Aorta (tissue), 5 donors: ENCODE measurements at regions of chr16 and their contacts with region 1.

Region 1: GRCh38 chr16:58582971-58583765 is 46.5 kb downstream of the CNOT1 start:
- DNase-seq: no peak
- ATAC-seq: no peak
- H3K4me3 ChIP-seq: no peak overlapping the region
- H3K27ac ChIP-seq: no peak overlapping the region
- H3K4me1 ChIP-seq: no peaks in the 10 kb centered on the region
- H3K27me3 ChIP-seq: no peaks in the 10 kb centered on the region

Region 2: DNA sequence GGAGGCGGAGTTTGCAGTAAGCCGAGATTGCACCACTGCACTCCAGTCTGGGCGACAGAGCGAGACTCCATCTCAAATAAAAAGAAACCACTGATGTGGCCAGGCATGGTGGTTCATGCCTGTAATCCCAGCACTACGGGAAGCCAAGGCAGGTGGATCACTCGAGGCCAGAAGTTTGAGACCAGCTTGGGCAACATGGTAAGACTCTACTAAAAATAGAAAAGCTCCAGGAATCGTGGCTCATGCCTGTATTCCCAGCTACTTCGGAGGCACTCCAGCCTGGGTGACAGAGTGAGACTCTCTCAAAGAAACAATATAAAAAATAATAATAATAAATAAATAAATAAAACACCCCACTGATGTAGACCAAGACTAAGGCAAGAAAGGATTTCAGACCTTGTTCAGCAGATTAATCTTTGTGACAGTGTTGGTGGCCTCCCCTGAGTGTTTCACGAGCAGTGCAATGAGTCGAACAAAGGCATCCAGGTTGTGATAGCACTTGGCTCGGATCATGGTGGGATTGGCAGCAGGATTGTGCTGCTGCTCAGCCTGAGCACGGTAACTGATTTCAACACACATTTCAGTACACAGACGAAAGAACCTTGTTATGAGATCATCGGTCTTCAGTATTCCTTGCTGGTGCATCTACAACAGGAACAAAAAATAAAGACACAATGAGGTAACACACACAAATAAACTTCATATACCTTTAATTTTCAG is 49.3 kb before region 1 on chr16:
- intact Hi-C with region 1: loop called in 1 of 2 experiments (anchors 10 kb)
- DNase-seq: no peak
- ATAC-seq: no peak
- H3K4me3 ChIP-seq: no peak overlapping the region
- H3K27ac ChIP-seq: no peak overlapping the region
- H3K4me1 ChIP-seq: no peaks in the 10 kb centered on the region
- H3K27me3 ChIP-seq: no peaks in the 10 kb centered on the region

Region 3: DNA sequence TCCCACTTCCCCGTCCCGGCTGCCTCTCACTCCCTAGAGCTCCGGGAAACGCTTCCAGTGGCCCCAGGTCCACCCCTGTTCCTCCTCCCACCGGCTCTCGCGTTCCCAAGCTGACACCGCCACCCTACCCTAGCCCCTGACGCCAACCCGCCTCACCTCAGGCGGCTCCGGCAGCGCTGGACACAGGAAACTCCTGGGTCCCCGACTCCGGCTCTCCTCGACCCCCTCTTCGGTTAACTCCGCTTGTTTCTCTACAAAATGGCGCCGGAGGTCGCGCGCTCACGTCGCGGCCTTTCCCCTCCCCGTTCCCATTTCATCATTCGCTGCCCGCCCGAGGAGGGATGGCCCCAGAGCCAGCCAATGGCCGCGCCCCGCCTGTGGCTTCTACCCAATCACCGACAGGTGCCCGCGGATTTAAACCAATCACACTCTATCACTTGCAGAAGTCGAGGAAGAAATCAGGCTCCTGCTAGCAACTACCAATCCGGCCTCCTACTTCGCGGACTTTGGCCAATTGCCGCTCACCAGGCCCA is 46.5 kb after region 1 on chr16 and contains the start of gene CNOT1:
- intact Hi-C with region 1: no loop called
- DNase-seq: peak; percentile 98
- ATAC-seq: peak; percentile 97
- H3K4me3 ChIP-seq: peak within 1 kb of the TSS; percentile 64 to 91
- H3K27ac ChIP-seq: peak within 1 kb of the TSS; percentile 87 to 96
- H3K4me1 ChIP-seq: no peaks in the 10 kb centered on the region
- H3K27me3 ChIP-seq: no peaks in the 10 kb centered on the region
- total RNA-seq, gene CNOT1: 103 to 124 TPM

Region 4: DNA sequence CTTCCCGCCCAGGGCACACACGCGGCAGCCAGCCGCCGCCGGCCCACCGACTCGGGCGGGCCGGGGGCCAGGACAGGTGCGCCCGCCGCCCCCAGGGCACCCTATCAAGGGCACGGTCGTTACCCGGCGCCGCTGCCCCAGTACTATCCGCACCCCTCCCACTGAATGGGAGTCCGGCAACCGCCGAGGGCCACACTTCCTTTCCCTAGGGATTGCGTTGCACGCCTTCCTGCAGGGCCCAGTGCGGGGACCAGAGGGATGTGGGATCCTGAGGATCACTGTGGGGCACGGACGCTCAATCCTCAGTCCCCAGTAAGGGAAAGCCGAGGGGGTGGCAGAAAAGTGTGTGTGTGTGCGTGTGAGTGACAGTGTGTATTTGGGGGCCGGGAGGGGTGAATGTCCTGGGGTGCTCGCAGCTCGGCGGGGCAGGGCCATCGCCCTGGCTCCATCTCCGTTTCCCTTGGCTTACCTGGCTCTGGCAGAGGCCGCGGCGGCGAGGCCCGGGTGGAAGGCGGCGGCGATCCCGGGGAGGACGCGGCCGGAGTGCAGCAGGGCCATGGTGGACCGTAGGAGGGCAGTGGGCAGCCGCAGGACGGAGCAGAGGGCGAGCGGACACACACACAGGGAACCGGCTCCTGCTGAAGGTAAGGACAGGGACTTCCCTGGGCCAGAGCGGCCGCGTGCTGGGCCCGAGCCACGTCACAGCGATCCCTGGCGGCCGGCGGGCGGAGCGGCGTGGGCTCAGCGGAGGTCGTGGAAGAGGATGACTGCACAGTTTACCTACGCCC is 150.7 kb after region 1 on chr16 and contains the start of gene GOT2:
- intact Hi-C with region 1: no loop called
- DNase-seq: peak; percentile 87 to 92
- ATAC-seq: peak; percentile 94
- H3K4me3 ChIP-seq: peak within 1 kb of the TSS; percentile 20 to 32
- H3K27ac ChIP-seq: peak within 1 kb of the TSS in 1 of 2 donors; percentile 1
- H3K4me1 ChIP-seq: no peaks in the 10 kb centered on the region
- H3K27me3 ChIP-seq: no peaks in the 10 kb centered on the region
- total RNA-seq, gene GOT2: 31.9 to 32.7 TPM